ENCODE measurements at regions of chr7 and their contacts with region 1.

Region 1: DNA sequence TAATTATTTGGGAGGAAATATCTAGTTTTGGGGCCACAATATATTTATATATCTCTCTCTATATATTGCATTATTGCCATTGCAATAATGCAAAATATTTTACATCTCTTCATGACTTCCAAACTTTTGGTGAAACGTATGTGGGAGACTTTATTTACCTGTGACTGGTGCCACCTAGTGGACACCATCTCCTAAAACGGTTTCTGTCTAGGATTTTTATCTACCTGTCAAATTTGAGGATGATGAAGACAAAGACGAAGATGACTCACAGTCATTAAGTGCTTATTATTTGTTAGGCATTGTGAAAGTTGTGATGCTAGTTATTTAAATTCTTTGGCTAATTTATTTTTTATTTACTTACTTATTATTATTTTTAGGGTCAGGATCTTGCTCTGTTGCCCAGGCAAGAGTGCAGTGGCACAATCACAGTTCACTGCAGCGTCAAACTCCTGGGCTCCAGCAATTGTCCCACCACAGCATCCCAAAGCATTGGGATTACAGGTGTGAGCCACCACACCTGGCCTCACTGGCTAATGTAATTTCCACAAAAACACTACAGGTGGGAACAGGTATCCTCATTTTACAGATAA is 18.7 kb upstream of the CBLL1 start:
- DNase-seq: peak; percentile 61
- ATAC-seq: no peak
- H3K4me3 Mint-ChIP-seq: no peak overlapping the region
- H3K27ac Mint-ChIP-seq: no peak overlapping the region
- H3K4me1 Mint-ChIP-seq: no peaks in the 10 kb centered on the region
- H3K27me3 Mint-ChIP-seq: peaks cover 23% of the 10 kb centered on the region

Region 2: GRCh38 chr7:107462740-107463444 is 262.4 kb before region 1 on chr7:
- CTCF ChIA-PET with region 1: interaction called, 11 read pairs
- DNase-seq: peak; percentile 62
- ATAC-seq: peak; percentile 86
- H3K4me3 Mint-ChIP-seq: no peak overlapping the region
- H3K27ac Mint-ChIP-seq: no peak overlapping the region
- H3K4me1 Mint-ChIP-seq: no peaks in the 10 kb centered on the region
- H3K27me3 Mint-ChIP-seq: no peaks in the 10 kb centered on the region